Endothelial cell of umbilical vein (primary cell): ENCODE measurements at regions of chr1 and their contacts with region 1.

Region 1: DNA sequence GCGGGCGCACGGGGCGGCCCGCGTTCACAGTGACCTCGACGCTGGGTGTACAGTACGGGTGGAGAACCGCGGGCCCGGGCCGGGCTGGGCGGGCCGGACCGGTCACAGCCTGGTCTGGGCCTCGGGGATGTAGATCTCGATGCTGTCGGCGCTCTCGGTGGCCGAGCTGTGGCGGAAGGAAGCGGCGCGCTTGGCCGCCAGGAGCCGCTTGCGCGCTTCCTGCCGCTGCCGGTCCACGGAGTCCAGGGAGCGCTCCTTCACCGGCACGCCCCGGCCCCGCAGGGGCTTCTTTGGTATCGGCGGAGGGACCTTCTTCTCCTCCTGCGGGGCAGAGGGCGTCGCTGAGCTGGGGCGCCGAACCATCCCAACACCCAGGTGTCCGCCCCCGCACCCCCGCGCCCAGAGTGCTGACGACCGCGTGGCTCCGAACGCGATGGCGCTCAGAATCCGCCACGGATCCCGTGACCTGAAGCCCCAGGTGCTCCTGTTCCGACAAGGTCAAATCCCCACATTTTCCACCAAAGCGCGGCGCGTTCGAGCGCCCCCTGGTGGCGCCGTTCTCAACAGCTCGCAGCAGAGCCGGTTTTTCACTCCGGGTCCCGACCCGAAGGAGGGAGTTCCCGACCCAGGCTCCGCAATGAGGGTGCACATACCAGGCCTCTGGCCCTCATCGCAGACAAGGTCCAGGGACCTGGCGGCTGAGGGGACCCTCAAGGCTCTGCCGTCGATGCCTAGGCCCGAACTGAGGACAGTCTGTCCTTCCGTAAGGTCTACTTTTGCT is 6.6 kb upstream of the SMIM12 start:
- DNase-seq: peak; percentile 63
- H3K4me3 ChIP-seq: peak overlapping the region; percentile 49 to 76 (median 70)
- H3K27ac ChIP-seq: peak overlapping the region; percentile 46
- H3K4me1 ChIP-seq: peaks cover 7% of the 10 kb centered on the region
- H3K27me3 ChIP-seq: peaks cover 12 to 18% of the 10 kb centered on the region in 2 experiments
- CTCF ChIP-seq: peak; percentile 93 to 97
- POLR2A ChIP-seq: peak; percentile 32

Region 2: DNA sequence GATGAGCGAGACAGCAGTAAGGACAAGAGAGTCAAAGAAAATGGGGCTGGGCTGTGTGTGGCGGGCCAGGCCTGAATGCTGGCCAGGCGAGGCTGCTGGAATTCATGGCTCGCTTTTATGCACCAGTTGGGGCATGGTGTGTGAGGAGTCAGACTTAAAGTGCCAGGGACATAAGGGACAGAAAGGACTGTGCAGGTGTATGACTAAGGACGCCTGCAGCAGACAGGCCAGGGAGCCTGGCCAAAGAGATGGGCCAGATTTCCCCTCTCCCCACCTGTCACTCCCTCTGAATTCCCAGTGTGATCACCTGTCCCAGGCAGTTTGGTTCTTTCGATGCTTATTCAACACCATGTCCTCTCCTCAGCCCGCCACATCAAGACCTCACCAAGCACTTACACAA is 10.2 kb after region 1 on chr1:
- CTCF ChIA-PET with region 1: interaction called, 13 read pairs
- POLR2A ChIA-PET with region 1: no interaction called
- dilution Hi-C with region 1: no loop called
- intact Hi-C with region 1: no loop called
- DNase-seq: no peak
- H3K4me3 ChIP-seq: no peak overlapping the region
- H3K27ac ChIP-seq: no peak overlapping the region
- H3K4me1 ChIP-seq: no peaks in the 10 kb centered on the region
- H3K27me3 ChIP-seq: peaks cover 13 to 16% of the 10 kb centered on the region in 2 experiments
- CTCF ChIP-seq: no peak
- POLR2A ChIP-seq: no peak

Region 3: GRCh38 chr1:34885405-34886247 is 19.5 kb after region 1 on chr1:
- CTCF ChIA-PET with region 1: interaction called, 20 read pairs
- POLR2A ChIA-PET with region 1: no interaction called
- dilution Hi-C with region 1: no loop called
- intact Hi-C with region 1: no loop called
- DNase-seq: peak; percentile 22
- H3K4me3 ChIP-seq: peak overlapping the region; percentile 15 to 31 (median 30)
- H3K27ac ChIP-seq: no peak overlapping the region
- H3K4me1 ChIP-seq: peaks cover 3% of the 10 kb centered on the region
- H3K27me3 ChIP-seq: peaks cover 24 to 25% of the 10 kb centered on the region in 2 experiments
- CTCF ChIP-seq: no peak
- POLR2A ChIP-seq: no peak

Region 4: DNA sequence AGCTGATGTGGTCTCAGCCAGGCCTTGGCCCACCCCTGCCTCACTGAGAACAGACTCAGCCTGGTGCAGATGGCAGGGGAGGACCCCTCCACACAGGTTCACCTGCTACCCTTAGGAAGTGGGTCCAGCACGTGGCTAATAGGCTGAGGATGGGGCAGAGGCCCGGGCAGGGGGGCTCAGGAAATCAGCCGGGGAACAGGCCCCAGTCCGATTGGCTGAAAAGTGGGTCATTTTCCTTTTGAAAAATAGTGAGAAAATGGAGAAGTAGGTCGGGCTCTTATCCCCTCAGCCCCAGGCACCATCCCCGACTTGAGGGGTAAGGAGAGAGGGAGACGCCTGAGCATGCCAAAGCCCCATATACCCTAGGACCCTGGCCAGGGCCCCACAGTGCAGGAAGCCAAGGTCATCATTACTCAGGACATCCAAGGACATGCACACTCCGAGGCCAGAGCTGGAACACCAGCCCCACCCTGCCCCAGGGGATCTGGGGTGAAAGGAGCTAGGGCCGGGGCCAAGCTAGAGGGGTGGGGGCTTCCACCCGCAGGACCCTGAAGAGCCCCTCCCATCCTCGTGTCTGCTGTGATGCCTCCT is 52.3 kb after region 1 on chr1:
- CTCF ChIA-PET with region 1: no interaction called
- POLR2A ChIA-PET with region 1: no interaction called
- dilution Hi-C with region 1: no loop called
- intact Hi-C with region 1: no loop called
- DNase-seq: no peak
- H3K4me3 ChIP-seq: no peak overlapping the region
- H3K27ac ChIP-seq: no peak overlapping the region
- H3K4me1 ChIP-seq: no peaks in the 10 kb centered on the region
- H3K27me3 ChIP-seq: no peaks in the 10 kb centered on the region
- CTCF ChIP-seq: no peak
- POLR2A ChIP-seq: no peak

Region 5: DNA sequence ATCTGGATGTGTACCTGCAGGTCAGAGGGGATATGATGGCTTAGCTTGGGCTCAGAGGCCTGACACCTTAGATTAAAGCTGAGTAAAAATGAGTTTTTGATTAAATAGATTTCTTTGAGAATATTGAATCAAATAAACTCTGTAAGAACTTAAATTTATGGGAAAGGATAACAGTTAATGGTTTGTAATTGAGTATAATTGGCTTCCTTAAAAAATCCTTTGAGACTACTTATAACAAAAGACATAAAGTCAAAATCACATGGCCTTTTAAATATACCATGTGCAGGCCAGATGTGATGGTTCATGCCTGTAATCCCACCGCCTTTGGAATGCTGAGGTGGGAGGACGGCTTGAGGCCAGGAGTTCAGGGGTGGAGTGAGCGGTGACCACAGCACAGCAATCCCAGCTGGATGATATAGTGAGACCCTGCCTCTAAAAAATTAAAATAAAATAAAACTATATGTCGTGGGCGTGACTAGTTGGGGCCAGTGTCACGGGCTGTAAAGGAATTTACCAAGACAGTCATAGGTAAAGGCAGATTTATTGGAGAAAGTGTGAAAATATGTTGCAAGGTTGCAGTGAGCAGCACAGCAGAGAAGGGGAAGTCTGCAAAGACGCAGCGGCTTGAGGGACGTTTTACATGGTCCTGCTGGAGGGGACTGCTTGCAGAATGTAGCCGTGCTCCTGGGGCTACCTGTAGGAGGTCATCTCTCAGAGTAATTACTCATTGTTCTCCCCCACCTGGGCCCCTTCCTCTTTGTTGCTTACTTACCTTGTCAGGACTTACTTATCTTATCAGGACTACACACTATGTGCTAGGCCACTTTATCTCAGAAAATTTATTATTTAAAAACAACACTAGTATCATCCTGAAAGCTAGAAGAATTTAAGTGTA is 524.7 kb after region 1 on chr1:
- CTCF ChIA-PET with region 1: no interaction called
- POLR2A ChIA-PET with region 1: no interaction called
- dilution Hi-C with region 1: no loop called
- intact Hi-C with region 1: no loop called
- DNase-seq: no peak
- H3K4me3 ChIP-seq: no peak overlapping the region
- H3K27ac ChIP-seq: no peak overlapping the region
- H3K4me1 ChIP-seq: no peaks in the 10 kb centered on the region
- H3K27me3 ChIP-seq: no peaks in the 10 kb centered on the region
- CTCF ChIP-seq: no peak
- POLR2A ChIP-seq: no peak